ENCODE measurements at regions of chr15 and their contacts with region 1.

Region 1: GRCh38 chr15:91515188-91515754 is 338.2 kb upstream of the SLCO3A1 start:
- DNase-seq: peak; percentile 63
- H3K4me3 ChIP-seq: no peak overlapping the region
- H3K27ac ChIP-seq: peak overlapping the region; percentile 9
- H3K4me1 ChIP-seq: no peaks in the 10 kb centered on the region
- H3K27me3 ChIP-seq: no peaks in the 10 kb centered on the region
- CTCF ChIP-seq: no peak

Region 2: DNA sequence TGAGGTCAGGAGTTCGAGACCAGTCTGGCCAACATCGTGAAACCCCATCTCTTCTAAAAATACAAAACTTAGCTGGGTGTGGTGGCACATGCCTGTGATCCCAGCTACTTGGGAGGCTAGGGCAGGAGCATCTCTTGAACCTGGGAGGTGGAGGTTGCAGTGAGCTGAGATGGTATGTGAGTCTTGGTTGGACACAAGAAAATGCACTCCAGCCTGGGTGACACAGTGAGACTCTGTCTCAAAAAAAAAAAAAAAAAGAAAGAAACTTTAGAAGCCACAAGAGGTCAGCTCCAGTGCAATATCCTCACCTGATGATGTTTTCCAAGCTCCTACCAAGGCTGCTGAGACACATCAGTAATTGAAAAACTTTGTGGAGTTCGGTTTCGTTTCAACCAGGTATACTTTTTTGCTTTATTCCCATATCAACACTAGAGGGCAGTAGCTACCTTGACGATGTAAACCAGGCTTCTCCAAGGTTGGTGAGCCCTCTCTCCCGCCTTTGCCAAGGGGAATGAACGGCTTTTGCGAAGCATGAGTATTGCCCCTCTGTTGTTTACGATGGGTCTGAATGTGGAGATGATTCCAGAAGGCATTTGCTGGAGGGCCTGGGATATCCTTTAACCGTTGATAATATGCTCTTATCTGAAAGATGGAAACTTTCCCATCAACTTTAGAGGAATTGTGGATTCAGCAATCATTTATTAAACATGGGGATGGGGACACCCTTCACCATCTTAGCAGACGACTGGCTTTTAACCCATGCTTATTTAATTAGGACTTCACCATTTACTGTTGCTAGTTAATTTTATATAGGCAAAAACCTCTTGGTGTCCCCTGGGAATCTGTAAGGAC is 212.5 kb before region 1 on chr15:
- intact Hi-C with region 1: loop called (anchors 10 kb)
- DNase-seq: no peak
- H3K4me3 ChIP-seq: no peak overlapping the region
- H3K27ac ChIP-seq: no peak overlapping the region
- H3K4me1 ChIP-seq: peaks cover 17% of the 10 kb centered on the region
- H3K27me3 ChIP-seq: peaks cover 27% of the 10 kb centered on the region
- CTCF ChIP-seq: peak; percentile 81

Region 3: GRCh38 chr15:91548549-91548948 is 33.3 kb after region 1 on chr15:
- intact Hi-C with region 1: no loop called
- DNase-seq: peak; percentile 53
- H3K4me3 ChIP-seq: no peak overlapping the region
- H3K27ac ChIP-seq: no peak overlapping the region
- H3K4me1 ChIP-seq: peaks cover 20% of the 10 kb centered on the region
- H3K27me3 ChIP-seq: no peaks in the 10 kb centered on the region
- CTCF ChIP-seq: no peak

Region 4: DNA sequence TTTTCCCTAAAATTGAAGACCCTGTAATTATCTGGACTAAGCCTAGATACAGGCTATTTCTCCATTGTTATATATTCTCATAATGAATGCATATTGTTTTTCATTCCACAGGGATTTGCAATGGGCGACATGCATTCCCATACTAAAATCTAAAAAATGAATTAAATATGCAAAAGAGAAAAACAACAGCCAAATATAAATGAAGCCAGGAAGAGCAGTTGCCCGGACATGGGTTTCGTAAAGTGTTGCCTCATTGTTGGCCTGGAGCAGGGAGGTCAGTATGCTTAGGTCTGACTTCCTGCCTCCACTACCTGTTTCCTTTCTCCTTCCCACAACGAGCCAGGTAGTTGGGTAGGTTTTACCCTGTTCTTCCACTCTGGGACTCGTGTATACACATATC is 311.2 kb after region 1 on chr15:
- intact Hi-C with region 1: no loop called
- DNase-seq: no peak
- H3K4me3 ChIP-seq: no peak overlapping the region
- H3K27ac ChIP-seq: no peak overlapping the region
- H3K4me1 ChIP-seq: peaks cover 17% of the 10 kb centered on the region
- H3K27me3 ChIP-seq: no peaks in the 10 kb centered on the region
- CTCF ChIP-seq: no peak

Measured in left ventricle myocardium inferior (tissue), 1 donor.